Prostate gland (tissue), 2 donors: ENCODE measurements at regions of chr19 and their contacts with region 1.

Region 1: DNA sequence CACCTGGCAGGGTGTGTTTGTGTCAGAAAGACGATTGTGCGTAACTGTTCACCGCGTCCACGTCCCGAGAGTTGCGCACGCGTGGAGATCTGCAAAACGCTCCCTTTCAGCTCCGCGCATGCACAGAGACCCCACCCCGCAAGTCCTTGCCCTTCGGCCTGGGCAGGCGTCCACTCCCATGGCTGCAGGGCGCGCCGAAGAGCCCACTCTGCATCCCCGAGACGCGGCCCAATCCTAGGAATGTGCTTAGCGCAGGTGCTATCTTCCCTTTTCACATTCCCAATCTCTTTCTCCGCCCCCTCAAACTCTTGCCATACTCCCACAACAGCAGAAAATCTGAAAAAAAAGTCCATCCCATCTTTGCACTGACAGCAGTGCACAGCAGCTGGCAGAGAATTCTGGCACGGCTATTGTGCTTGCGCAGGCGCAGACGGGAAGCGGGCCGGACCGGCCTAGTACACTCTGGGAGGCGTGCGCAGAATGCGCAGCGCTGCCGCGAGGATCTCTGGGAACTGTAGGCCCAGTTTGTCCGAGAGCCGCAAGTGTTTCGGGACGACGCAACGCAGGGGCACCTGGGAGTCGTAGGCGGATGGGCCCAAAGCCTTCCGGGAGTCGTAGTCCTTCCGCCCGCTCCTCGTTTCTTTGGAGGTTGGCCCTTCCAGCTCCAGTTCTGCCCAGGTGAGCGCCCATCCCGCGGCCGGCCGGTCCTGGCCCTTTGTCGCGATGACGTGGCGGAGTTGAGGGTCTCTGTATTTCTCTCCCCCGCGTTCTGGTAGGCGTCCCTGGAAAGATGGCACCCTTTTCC is 23.1 kb downstream of the ZNF175 start:
- DNase-seq: peak; percentile 98
- H3K4me3 ChIP-seq: peak overlapping the region; percentile 51 to 64
- H3K27ac ChIP-seq: peak overlapping the region; percentile 32 to 34
- H3K4me1 ChIP-seq: peaks cover 3% of the 10 kb centered on the region
- H3K27me3 ChIP-seq: no peaks in the 10 kb centered on the region
- CTCF ChIP-seq: peak in 2 of 4 experiments; percentile 15 to 17
- POLR2A ChIP-seq: no peak

Region 2: GRCh38 chr19:51108066-51108804 is 485.9 kb before region 1 on chr19 and contains the start of gene CTU1:
- intact Hi-C with region 1: loop called (anchors 5 kb)
- DNase-seq: peak; percentile 99
- H3K4me3 ChIP-seq: peak within 1 kb of the TSS; percentile 60 to 68
- H3K27ac ChIP-seq: peak within 1 kb of the TSS; percentile 34 to 49
- H3K4me1 ChIP-seq: peaks cover 6% of the 10 kb centered on the region
- H3K27me3 ChIP-seq: no peaks in the 10 kb centered on the region
- CTCF ChIP-seq: peak in 2 of 4 experiments; percentile 12 to 43
- POLR2A ChIP-seq: no peak
- total RNA-seq, gene CTU1: 18.7 to 21.4 TPM

Region 3: GRCh38 chr19:51493776-51494175 is 100.4 kb before region 1 on chr19:
- intact Hi-C with region 1: no loop called
- DNase-seq: no peak
- H3K4me3 ChIP-seq: no peak overlapping the region
- H3K27ac ChIP-seq: no peak overlapping the region
- H3K4me1 ChIP-seq: no peaks in the 10 kb centered on the region
- H3K27me3 ChIP-seq: no peaks in the 10 kb centered on the region
- CTCF ChIP-seq: no peak
- POLR2A ChIP-seq: no peak

Region 4: GRCh38 chr19:51570962-51571575 is 23.1 kb before region 1 on chr19 and contains the start of gene ZNF175:
- intact Hi-C with region 1: loop called (anchors 2 kb)
- DNase-seq: peak; percentile 94
- H3K4me3 ChIP-seq: peak within 1 kb of the TSS; percentile 43 to 65
- H3K27ac ChIP-seq: peak within 1 kb of the TSS; percentile 13 to 33
- H3K4me1 ChIP-seq: no peaks in the 10 kb centered on the region
- H3K27me3 ChIP-seq: no peaks in the 10 kb centered on the region
- CTCF ChIP-seq: no peak
- POLR2A ChIP-seq: peak; percentile 40
- total RNA-seq, gene ZNF175: 4.3 to 9.0 TPM

Region 5: DNA sequence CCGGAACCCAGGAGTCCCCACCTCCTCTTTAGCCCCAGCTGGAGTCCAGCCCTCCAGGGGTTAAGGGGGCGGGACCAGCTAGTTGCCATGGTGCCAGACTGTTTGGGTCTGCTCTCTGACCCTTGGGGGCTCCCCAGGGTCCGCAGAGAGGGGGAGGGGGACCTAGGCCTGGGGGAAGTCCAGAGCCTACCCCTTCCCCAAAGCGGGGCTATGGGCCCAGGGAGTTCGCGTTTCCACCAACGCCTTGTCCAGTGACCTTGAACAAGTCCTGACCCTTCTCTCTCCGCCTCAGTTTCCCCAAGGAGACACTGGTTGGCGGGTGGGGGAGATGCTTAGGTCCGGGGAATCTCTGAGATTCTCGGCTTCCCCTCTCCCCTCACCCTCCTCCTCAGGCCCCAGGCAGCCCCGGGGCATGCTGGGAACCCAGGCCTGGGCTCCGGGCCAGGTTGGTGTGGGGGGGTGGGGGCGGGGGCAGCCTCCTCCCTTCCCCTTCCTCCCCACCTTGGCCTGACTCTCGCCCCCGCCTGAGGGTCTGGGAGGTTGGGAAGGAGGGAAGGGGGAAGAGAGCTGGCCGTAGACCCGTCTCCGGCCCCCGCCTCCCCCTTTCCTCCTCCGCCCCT is 96.4 kb after region 1 on chr19:
- intact Hi-C with region 1: loop called (anchors 5 kb)
- DNase-seq: peak; percentile 48
- H3K4me3 ChIP-seq: peak overlapping the region; percentile 70 to 99
- H3K27ac ChIP-seq: peak overlapping the region; percentile 94 to 98
- H3K4me1 ChIP-seq: peaks cover 7% of the 10 kb centered on the region
- H3K27me3 ChIP-seq: no peaks in the 10 kb centered on the region
- CTCF ChIP-seq: peak in 1 of 4 experiments; percentile 1
- POLR2A ChIP-seq: peak; percentile 41